ENCODE measurements at regions of chr6 and their contacts with region 1.

Region 1: DNA sequence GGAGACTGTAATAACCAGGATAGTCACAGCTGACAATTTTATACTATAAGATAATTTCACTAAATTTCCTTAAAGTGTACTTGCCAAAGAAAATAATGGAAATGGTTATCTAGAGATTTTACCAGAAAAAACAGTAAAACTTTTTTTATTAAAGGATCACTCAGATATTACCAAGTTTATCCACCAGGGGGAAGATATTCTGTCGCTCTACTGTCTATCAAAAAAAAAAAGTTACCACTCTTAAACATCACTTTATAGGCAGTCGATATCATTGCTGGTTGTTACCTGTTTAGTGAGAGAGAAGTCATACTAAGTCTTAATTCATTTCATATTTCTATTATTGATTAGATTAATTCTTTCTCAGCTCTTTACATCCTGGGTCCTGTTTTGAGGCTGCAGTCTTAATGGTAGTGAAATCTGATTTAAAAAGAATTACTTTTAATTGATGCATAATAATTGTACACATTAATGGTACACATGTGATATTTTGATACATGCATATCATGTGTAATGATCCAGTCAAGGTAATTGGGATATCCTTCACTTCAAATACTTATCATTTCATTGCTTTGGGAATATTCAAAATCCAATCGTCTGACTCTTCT is 18.9 kb downstream of the L3MBTL3 start:
- DNase-seq: peak; percentile 40
- ATAC-seq: no peak
- H3K4me3 ChIP-seq: no peak overlapping the region
- H3K27ac ChIP-seq: no peak overlapping the region
- H3K4me1 ChIP-seq: peaks cover 12% of the 10 kb centered on the region
- H3K27me3 ChIP-seq: no peaks in the 10 kb centered on the region
- CTCF ChIP-seq: peak; percentile 56

Region 2: GRCh38 chr6:130760006-130760405 is 722.7 kb after region 1 on chr6:
- CTCF ChIA-PET with region 1: no interaction called
- POLR2A ChIA-PET with region 1: no interaction called
- intact Hi-C with region 1: loop called (anchors 1 kb)
- DNase-seq: peak; percentile 66
- ATAC-seq: peak; percentile 85
- H3K4me3 ChIP-seq: no peak overlapping the region
- H3K27ac ChIP-seq: no peak overlapping the region
- H3K4me1 ChIP-seq: no peaks in the 10 kb centered on the region
- H3K27me3 ChIP-seq: no peaks in the 10 kb centered on the region
- CTCF ChIP-seq: peak; percentile 80